ENCODE measurements at regions of chr14 and their contacts with region 1.

Region 1: GRCh38 chr14:38915125-38915524 is 187.9 kb downstream of the SEC23A start:
- DNase-seq: no peak
- H3K4me3 ChIP-seq: no peak overlapping the region
- H3K27ac ChIP-seq: no peak overlapping the region
- H3K4me1 ChIP-seq: no peaks in the 10 kb centered on the region
- H3K27me3 ChIP-seq: no peaks in the 10 kb centered on the region
- CTCF ChIP-seq: no peak

Region 2: DNA sequence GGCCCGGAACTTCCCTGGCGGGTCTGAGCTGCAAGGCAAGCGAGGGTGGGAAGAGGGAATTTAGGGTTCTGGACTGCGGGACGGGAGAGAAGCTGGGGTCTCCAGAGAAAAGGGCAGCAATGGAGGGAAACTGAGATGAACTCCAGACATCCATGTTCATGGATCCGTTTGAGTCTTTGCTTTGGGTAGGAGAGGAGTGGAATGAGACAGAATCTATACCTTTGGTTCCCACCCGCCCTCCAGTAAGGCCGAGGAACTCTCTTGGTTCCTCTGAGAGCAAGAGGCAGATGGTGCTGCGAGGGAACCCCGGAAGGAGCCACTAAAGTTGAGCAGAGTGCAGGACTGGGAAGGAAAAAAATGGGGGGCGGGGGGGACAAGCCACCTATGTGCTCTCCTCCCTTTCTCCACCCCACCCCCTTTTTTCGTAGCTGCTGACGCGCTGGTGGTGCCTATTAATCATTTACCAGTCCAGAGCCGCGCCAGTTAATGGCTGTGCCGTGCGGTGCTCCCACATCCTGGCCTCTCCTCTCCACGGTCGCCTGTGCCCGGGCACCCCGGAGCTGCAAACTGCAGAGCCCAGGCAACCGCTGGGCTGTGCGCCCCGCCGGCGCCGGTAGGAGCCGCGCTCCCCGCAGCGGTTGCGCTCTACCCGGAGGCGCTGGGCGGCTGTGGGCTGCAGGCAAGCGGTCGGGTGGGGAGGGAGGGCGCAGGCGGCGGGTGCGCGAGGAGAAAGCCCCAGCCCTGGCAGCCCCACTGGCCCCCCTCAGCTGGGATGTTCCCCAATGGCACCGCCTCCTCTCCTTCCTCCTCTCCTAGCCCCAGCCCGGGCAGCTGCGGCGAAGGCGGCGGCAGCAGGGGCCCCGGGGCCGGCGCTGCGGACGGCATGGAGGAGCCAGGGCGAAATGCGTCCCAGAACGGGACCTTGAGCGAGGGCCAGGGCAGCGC is 706.2 kb before region 1 on chr14:
- CTCF ChIA-PET with region 1: no interaction called
- POLR2A ChIA-PET with region 1: interaction called, 18 read pairs
- intact Hi-C with region 1: no loop called
- DNase-seq: peak; percentile 81
- H3K4me3 ChIP-seq: peak overlapping the region; percentile 55
- H3K27ac ChIP-seq: no peak overlapping the region
- H3K4me1 ChIP-seq: peaks cover 4% of the 10 kb centered on the region
- H3K27me3 ChIP-seq: peaks cover 26% of the 10 kb centered on the region
- CTCF ChIP-seq: peak; percentile 48

Region 3: GRCh38 chr14:38887696-38888095 is 27.4 kb before region 1 on chr14:
- CTCF ChIA-PET with region 1: no interaction called
- POLR2A ChIA-PET with region 1: no interaction called
- intact Hi-C with region 1: no loop called
- DNase-seq: peak; percentile 43
- H3K4me3 ChIP-seq: no peak overlapping the region
- H3K27ac ChIP-seq: no peak overlapping the region
- H3K4me1 ChIP-seq: no peaks in the 10 kb centered on the region
- H3K27me3 ChIP-seq: no peaks in the 10 kb centered on the region
- CTCF ChIP-seq: no peak

Measured in A673 (cell line).